Natural killer cell (primary cell): ENCODE measurements at regions of chr22 and their contacts with region 1.

Region 1: GRCh38 chr22:37457093-37457893 is 28.9 kb downstream of the MFNG start:
- DNase-seq: peak; percentile 79 to 89
- ATAC-seq: peak; percentile 86 to 99 (median 96)
- H3K4me3 ChIP-seq: no peak overlapping the region
- H3K4me3 Mint-ChIP-seq: no peak overlapping the region
- H3K27ac ChIP-seq: no peak overlapping the region
- H3K27ac Mint-ChIP-seq: no peak overlapping the region
- H3K4me1 ChIP-seq: no peaks in the 10 kb centered on the region
- H3K4me1 Mint-ChIP-seq: peaks cover 5 to 21% of the 10 kb centered on the region in 2 donors
- H3K27me3 ChIP-seq: no peaks in the 10 kb centered on the region
- H3K27me3 Mint-ChIP-seq: no peaks in the 10 kb centered on the region
- CTCF ChIP-seq: peak; percentile 96

Region 2: DNA sequence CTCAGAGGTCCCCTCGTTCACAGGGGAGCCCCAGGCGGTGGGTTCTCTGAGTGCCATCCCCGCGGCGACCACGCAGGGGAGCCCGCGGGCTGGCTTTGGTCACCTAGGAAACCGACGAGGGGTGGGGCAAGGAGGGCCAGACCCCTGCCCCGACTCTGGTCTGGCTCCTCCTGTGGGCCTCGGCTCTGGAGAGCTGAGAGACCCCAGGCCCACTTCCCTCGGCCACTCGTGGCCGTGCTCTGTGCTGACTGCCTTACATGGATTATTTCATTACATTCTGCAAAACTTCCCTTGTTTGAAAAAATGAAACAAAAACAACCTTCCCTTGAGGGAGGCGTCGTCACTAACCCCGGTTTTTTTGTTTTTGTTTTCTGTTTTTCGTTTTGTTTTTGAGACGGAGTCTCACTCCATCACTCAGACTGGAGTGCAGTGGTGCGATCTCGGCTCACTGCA is 190.1 kb before region 1 on chr22:
- intact Hi-C with region 1: loop called (anchors 1 kb)
- DNase-seq: peak; percentile 76 to 84
- ATAC-seq: peak; percentile 90 to 95 (median 95)
- H3K4me3 ChIP-seq: peak overlapping the region; percentile 67
- H3K4me3 Mint-ChIP-seq: peak overlapping the region; percentile 89
- H3K27ac ChIP-seq: peak overlapping the region; percentile 89
- H3K27ac Mint-ChIP-seq: peak overlapping the region; percentile 88 to 96
- H3K4me1 ChIP-seq: peaks cover 19% of the 10 kb centered on the region
- H3K4me1 Mint-ChIP-seq: peaks cover 24% of the 10 kb centered on the region in 2 donors
- H3K27me3 ChIP-seq: no peaks in the 10 kb centered on the region
- H3K27me3 Mint-ChIP-seq: peaks cover 0 to 6% of the 10 kb centered on the region in 2 donors
- CTCF ChIP-seq: peak; percentile 91

Region 3: DNA sequence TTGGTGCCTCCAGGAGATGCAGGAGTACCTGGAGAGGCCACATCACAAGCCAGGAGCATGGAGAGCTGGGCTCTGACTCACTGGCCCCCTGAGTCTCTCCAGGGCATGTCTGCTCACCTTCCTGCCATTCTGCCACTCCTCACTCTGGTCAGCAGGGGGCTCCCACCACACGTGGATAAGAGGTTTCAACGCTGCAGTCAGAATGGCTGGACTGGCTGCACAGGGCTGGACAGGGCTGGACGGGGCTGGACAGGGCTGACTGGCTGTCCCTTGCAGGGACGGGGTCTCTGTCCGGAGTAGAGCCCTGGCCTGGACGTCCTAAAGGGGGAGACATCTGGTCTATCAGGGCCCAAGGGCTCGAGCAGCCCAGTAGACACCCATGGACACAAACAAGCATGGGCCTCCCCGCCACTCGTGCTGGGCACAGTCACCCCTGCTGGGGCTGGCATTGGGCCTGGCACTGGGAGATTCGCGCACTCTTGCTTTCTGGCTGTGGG is 140.4 kb before region 1 on chr22:
- intact Hi-C with region 1: loop called (anchors 1 kb)
- DNase-seq: peak; percentile 60 to 87
- ATAC-seq: peak; percentile 80 to 91 (median 82)
- H3K4me3 ChIP-seq: no peak overlapping the region
- H3K4me3 Mint-ChIP-seq: no peak overlapping the region
- H3K27ac ChIP-seq: no peak overlapping the region
- H3K27ac Mint-ChIP-seq: no peak overlapping the region
- H3K4me1 ChIP-seq: peaks cover 39% of the 10 kb centered on the region
- H3K4me1 Mint-ChIP-seq: peaks cover 28 to 47% of the 10 kb centered on the region in 2 donors
- H3K27me3 ChIP-seq: no peaks in the 10 kb centered on the region
- H3K27me3 Mint-ChIP-seq: peaks cover 0 to 4% of the 10 kb centered on the region in 2 donors
- CTCF ChIP-seq: peak; percentile 77